Activated B cell treated with CpG ODN at 0.5 μM for 24 hours (primary cell): ENCODE measurements at regions of chr6 and their contacts with region 1.

Region 1: GRCh38 chr6:90393232-90393884 is 96.7 kb upstream of the BACH2 start:
- DNase-seq: peak; percentile 47
- ATAC-seq: peak; percentile 53
- H3K4me3 Mint-ChIP-seq: peak overlapping the region; percentile 28
- H3K27ac Mint-ChIP-seq: peak overlapping the region; percentile 59
- H3K4me1 Mint-ChIP-seq: peaks cover 45% of the 10 kb centered on the region
- H3K27me3 Mint-ChIP-seq: no peaks in the 10 kb centered on the region
- CTCF ChIP-seq: peak; percentile 67

Region 2: GRCh38 chr6:89940225-89941027 is 452.9 kb before region 1 on chr6:
- CTCF ChIA-PET with region 1: interaction called, 22 read pairs
- POLR2A ChIA-PET with region 1: interaction called, 4 read pairs
- intact Hi-C with region 1: loop called (anchors 1 kb)
- DNase-seq: no peak
- ATAC-seq: peak; percentile 89
- H3K4me3 Mint-ChIP-seq: no peak overlapping the region
- H3K27ac Mint-ChIP-seq: peak overlapping the region; percentile 59
- H3K4me1 Mint-ChIP-seq: peaks cover 13% of the 10 kb centered on the region
- H3K27me3 Mint-ChIP-seq: no peaks in the 10 kb centered on the region
- CTCF ChIP-seq: peak; percentile 58

Region 3: DNA sequence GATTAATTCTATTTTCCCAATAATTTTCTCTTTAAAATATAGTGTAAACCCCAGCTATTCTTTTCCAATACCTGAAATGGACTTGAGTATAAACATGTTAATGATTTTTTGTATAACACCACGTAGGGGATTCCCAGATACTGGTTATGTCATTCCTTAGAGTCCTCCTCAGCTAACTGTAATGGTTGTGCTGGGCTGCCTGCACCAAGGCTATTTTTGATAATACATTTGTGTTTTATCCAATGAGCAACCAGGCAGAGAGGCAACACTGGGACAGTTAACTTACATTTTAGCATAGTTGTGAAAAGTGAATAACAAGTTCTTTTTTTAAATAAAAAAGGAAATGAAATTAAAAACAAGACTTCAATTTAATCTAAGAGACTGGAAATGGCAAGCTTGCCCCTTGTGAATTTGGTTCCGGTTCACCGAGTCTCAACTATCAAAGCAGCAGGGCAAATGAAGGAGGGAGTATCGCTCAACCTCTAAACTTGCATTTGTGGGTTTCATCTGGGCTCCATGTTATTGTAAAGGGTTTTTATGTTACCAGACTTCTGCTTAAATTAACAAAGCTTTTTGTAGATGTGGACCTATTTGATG is 77.9 kb before region 1 on chr6:
- CTCF ChIA-PET with region 1: interaction called, 8 read pairs
- POLR2A ChIA-PET with region 1: interaction called, 7 read pairs
- intact Hi-C with region 1: loop called (anchors 1 kb)
- DNase-seq: no peak
- ATAC-seq: peak; percentile 84
- H3K4me3 Mint-ChIP-seq: peak overlapping the region; percentile 55
- H3K27ac Mint-ChIP-seq: peak overlapping the region; percentile 91
- H3K4me1 Mint-ChIP-seq: peaks cover 72% of the 10 kb centered on the region
- H3K27me3 Mint-ChIP-seq: no peaks in the 10 kb centered on the region
- CTCF ChIP-seq: no peak

Region 4: GRCh38 chr6:90369024-90369519 is 24.3 kb before region 1 on chr6:
- CTCF ChIA-PET with region 1: interaction called, 13 read pairs
- POLR2A ChIA-PET with region 1: interaction called, 4 read pairs
- intact Hi-C with region 1: loop called (anchors 2 kb)
- DNase-seq: no peak
- ATAC-seq: peak; percentile 90
- H3K4me3 Mint-ChIP-seq: no peak overlapping the region
- H3K27ac Mint-ChIP-seq: peak overlapping the region; percentile 6
- H3K4me1 Mint-ChIP-seq: peaks cover 47% of the 10 kb centered on the region
- H3K27me3 Mint-ChIP-seq: no peaks in the 10 kb centered on the region
- CTCF ChIP-seq: no peak

Region 5: GRCh38 chr6:90383196-90383822 is 10.0 kb before region 1 on chr6:
- CTCF ChIA-PET with region 1: interaction called, 11 read pairs
- POLR2A ChIA-PET with region 1: interaction called, 4 read pairs
- intact Hi-C with region 1: loop called (anchors 1 kb)
- DNase-seq: no peak
- ATAC-seq: peak; percentile 80
- H3K4me3 Mint-ChIP-seq: peak overlapping the region; percentile 61
- H3K27ac Mint-ChIP-seq: peak overlapping the region; percentile 75
- H3K4me1 Mint-ChIP-seq: peaks cover 80% of the 10 kb centered on the region
- H3K27me3 Mint-ChIP-seq: no peaks in the 10 kb centered on the region
- CTCF ChIP-seq: no peak

Region 6: DNA sequence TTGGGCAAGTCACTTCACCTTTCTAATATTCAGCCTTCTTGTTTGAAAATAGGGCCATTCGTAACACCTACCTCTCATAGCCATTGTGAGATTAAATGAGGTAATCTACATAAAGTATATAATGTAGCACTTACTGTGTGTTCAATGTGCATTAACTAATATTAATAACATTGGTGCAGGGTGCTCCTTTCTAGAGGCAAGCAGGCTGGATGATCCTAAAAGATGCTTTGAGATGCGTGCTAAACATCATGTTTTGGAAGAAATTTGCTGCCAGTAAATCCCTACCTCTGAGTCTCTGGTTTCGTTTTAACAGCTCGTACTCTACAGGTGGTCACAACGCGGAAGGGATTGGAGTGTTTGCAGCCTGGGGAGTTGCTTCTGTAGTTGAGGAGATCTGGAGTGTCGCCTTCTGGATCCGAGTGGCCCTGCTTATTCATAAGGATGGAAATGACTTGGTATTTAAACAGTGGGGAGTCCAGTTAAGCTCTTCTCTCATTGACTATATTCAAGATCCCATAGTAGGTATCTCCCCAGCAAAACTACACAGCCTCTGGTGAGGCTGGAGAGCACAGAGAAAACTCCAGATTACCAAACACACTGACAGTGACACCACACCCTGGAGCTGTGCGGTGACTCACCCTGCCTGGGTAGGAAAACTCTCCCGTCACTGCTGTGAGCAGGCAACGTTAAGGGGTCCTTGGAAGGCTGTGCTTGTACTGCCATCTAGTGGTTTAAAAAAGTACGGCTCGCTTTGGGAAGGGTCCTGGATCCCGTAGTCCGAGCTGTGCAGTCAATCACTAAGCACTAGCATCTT is 85.6 kb after region 1 on chr6:
- CTCF ChIA-PET with region 1: interaction called, 30 read pairs
- POLR2A ChIA-PET with region 1: interaction called, 4 read pairs
- intact Hi-C with region 1: loop called (anchors 1 kb)
- DNase-seq: peak; percentile 54
- ATAC-seq: peak; percentile 96
- H3K4me3 Mint-ChIP-seq: no peak overlapping the region
- H3K27ac Mint-ChIP-seq: peak overlapping the region; percentile 64
- H3K4me1 Mint-ChIP-seq: peaks cover 22% of the 10 kb centered on the region
- H3K27me3 Mint-ChIP-seq: no peaks in the 10 kb centered on the region
- CTCF ChIP-seq: peak; percentile 95